A673 (cell line): ENCODE measurements at regions of chr1 and their contacts with region 1.

Region 1: GRCh38 chr1:72705921-72706320 is 423.6 kb upstream of the NEGR1 start:
- DNase-seq: peak; percentile 88
- H3K4me3 ChIP-seq: peak overlapping the region; percentile 46
- H3K27ac ChIP-seq: peak overlapping the region; percentile 99
- H3K4me1 ChIP-seq: peaks cover 50% of the 10 kb centered on the region
- H3K27me3 ChIP-seq: no peaks in the 10 kb centered on the region
- CTCF ChIP-seq: no peak

Region 2: GRCh38 chr1:70720109-70720508 is 1985.8 kb before region 1 on chr1:
- CTCF ChIA-PET with region 1: no interaction called
- POLR2A ChIA-PET with region 1: no interaction called
- intact Hi-C with region 1: loop called (anchors 2 kb)
- DNase-seq: peak; percentile 97
- H3K4me3 ChIP-seq: peak overlapping the region; percentile 14
- H3K27ac ChIP-seq: peak overlapping the region; percentile 99
- H3K4me1 ChIP-seq: peaks cover 42% of the 10 kb centered on the region
- H3K27me3 ChIP-seq: no peaks in the 10 kb centered on the region
- CTCF ChIP-seq: no peak

Region 3: GRCh38 chr1:72111662-72112061 is 594.3 kb before region 1 on chr1:
- CTCF ChIA-PET with region 1: no interaction called
- POLR2A ChIA-PET with region 1: no interaction called
- intact Hi-C with region 1: loop called (anchors 2 kb)
- DNase-seq: peak; percentile 89
- H3K4me3 ChIP-seq: no peak overlapping the region
- H3K27ac ChIP-seq: peak overlapping the region; percentile 74
- H3K4me1 ChIP-seq: peaks cover 82% of the 10 kb centered on the region
- H3K27me3 ChIP-seq: no peaks in the 10 kb centered on the region
- CTCF ChIP-seq: no peak

Region 4: DNA sequence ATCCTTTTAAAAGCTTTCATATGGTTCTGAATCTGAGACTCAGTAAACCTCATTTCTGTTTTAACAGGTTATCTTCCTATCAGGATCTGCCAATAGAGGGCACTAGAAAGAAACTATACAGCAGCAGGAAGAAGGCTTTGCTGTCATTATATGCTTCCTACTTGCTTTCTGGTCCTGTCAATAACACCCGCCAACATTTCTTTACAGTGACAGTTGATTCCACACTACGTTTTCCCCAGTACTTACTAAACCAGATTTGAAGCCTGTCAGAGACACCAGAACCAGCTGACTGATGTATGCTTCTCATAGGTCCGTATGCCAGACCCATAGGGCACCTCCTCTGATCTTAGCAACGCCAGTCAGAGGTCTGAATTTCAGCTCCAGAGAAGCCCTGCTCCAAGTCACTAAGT is 82.6 kb before region 1 on chr1:
- CTCF ChIA-PET with region 1: no interaction called
- POLR2A ChIA-PET with region 1: interaction called, 5 read pairs
- intact Hi-C with region 1: loop called (anchors 2 kb)
- DNase-seq: peak; percentile 86
- H3K4me3 ChIP-seq: no peak overlapping the region
- H3K27ac ChIP-seq: peak overlapping the region; percentile 32
- H3K4me1 ChIP-seq: peaks cover 7% of the 10 kb centered on the region
- H3K27me3 ChIP-seq: no peaks in the 10 kb centered on the region
- CTCF ChIP-seq: peak; percentile 76

Region 5: DNA sequence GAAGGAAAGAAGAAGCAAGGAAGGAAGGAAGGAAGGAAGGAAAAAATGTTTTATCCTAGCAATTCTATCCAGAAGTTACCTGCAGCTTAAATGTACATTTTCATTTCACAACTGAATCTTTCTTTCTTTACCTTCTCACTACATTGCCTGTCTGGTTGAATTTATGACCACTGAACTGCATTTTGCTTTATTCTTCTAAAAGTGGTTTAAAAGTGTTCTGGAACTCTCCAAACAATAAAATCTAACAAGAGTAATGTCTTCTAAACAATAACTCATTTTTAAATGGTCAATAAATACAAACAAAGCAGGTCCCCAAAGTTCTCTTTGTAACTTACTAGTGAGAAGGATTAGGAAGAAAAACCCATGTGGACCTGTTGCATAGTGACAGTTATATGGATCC is 164.0 kb after region 1 on chr1:
- CTCF ChIA-PET with region 1: interaction called, 8 read pairs
- POLR2A ChIA-PET with region 1: interaction called, 24 read pairs
- intact Hi-C with region 1: loop called (anchors 1 kb)
- DNase-seq: peak; percentile 80
- H3K4me3 ChIP-seq: no peak overlapping the region
- H3K27ac ChIP-seq: peak overlapping the region; percentile 84
- H3K4me1 ChIP-seq: peaks cover 31% of the 10 kb centered on the region
- H3K27me3 ChIP-seq: no peaks in the 10 kb centered on the region
- CTCF ChIP-seq: no peak